Aorta (tissue), 5 donors: ENCODE measurements at regions of chr9 and their contacts with region 1.

Region 1: GRCh38 chr9:35698231-35698630 is 8.5 kb upstream of the TPM2 start:
- DNase-seq: peak in 1 of 2 donors; percentile 65
- ATAC-seq: no peak
- H3K4me3 ChIP-seq: no peak overlapping the region
- H3K27ac ChIP-seq: peak overlapping the region in 1 of 2 donors; percentile 72
- H3K4me1 ChIP-seq: no peaks in the 10 kb centered on the region
- H3K27me3 ChIP-seq: no peaks in the 10 kb centered on the region

Region 2: GRCh38 chr9:35718721-35719511 is 20.7 kb after region 1 on chr9:
- intact Hi-C with region 1: loop called in 1 of 2 experiments (anchors 2 kb)
- DNase-seq: peak in 1 of 2 donors; percentile 24
- ATAC-seq: no peak
- H3K4me3 ChIP-seq: no peak overlapping the region
- H3K27ac ChIP-seq: no peak overlapping the region
- H3K4me1 ChIP-seq: no peaks in the 10 kb centered on the region
- H3K27me3 ChIP-seq: no peaks in the 10 kb centered on the region

Region 3: DNA sequence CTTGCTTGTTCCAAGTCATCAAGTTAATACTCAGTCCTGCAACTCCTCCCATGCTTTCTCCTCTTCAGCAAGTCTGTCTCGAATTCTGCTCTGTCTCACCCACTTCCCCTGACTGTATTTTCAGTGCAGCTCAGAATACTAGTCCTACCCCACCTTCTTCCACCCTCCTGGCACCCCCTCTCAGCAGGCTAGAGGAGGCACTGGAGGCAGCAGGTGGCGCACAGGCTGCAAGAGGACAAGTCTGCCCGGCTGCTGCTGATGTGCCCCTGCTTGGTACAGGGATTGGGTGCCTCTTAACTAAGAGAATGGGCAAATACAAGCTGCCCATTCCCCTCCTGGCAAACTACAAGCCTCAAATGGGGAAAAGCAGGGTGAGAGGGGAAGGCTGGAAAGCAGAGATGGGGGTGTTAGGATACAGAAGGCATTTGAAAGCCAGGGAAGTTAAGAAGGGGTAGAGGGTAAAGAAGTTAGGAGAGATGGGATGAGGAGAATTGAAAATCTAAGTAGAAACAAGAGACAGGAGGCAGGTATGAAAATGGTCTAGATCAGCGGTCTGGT is 28.7 kb after region 1 on chr9:
- intact Hi-C with region 1: loop called in 1 of 2 experiments (anchors 2 kb)
- DNase-seq: peak; percentile 81 to 88
- ATAC-seq: peak; percentile 60
- H3K4me3 ChIP-seq: peak overlapping the region in 1 of 2 donors; percentile 18
- H3K27ac ChIP-seq: peak overlapping the region; percentile 77 to 92
- H3K4me1 ChIP-seq: peaks cover 0 to 2% of the 10 kb centered on the region in 2 donors
- H3K27me3 ChIP-seq: no peaks in the 10 kb centered on the region

Region 4: DNA sequence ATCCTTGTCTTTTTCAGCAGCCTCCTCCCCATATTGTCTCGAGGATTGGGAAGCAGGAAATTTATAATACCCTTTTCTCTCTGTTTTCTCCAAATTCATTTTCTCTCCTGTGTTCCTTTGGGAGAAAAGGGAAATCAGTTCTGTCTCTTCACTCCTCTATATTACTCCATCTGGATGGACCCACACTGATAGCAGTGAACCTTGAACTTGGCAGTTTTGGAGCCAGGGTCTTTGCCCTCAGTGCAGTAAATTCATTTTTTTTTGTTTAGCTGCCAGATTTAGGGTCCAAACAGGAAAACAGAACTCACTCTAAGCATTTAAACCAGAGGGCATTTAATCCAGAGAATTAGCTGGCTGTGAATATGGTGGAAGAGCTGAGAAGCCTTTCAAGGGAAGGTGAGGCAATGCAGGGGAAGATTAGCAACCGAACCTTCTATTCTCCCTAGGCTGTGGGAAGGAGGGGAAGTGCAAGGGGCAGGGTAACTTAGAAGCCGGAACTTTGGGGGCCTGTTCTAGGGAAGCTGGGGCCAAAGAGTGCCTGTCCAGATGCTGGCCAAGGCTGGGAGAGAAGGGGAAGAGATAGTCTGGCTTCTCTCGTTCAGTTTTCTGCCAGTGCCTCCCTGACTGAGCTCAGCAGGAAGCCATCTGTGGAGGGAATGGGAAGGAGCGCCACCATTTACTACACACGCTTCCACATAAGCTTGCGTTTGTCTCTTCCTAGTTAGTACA is 76.8 kb after region 1 on chr9:
- intact Hi-C with region 1: no loop called
- DNase-seq: peak in 1 of 2 donors; percentile 54
- ATAC-seq: peak; percentile 44
- H3K4me3 ChIP-seq: no peak overlapping the region
- H3K27ac ChIP-seq: no peak overlapping the region
- H3K4me1 ChIP-seq: peaks cover 0 to 1% of the 10 kb centered on the region in 2 donors
- H3K27me3 ChIP-seq: no peaks in the 10 kb centered on the region

Region 5: GRCh38 chr9:35935755-35936509 is 237.7 kb after region 1 on chr9:
- intact Hi-C with region 1: no loop called
- DNase-seq: no peak
- ATAC-seq: peak; percentile 66
- H3K4me3 ChIP-seq: no peak overlapping the region
- H3K27ac ChIP-seq: peak overlapping the region in 1 of 2 donors; percentile 96
- H3K4me1 ChIP-seq: peaks cover 0 to 5% of the 10 kb centered on the region in 2 donors
- H3K27me3 ChIP-seq: no peaks in the 10 kb centered on the region